Calu3 (cell line): ENCODE measurements at regions of chr18 and their contacts with region 1.

Region 1: DNA sequence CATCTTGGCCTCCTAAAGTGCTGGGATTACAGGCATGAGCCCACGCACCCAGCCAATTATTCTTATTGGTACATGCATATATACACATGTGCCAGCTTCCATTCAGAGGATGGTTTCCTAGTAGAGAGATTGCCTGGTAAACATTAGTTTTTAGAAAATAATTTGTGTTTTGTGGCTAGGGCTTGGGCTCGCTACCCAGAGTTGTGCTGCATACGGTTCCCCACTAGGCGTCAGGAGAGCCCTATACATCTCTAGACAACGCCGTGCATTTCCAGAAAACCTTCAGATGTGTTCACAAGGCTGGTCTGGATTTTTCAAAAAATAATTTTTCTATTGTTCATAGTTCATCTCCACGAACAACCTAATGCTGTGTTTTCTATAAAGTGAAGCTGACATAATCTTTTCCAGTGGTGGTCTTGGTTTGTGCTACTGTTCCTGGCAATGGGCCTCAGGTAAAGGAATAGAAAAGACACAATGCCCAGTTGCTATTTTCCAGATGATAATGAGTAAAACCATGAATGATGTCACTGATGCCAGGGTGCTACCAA is 14.7 kb upstream of the AFG3L2 start:
- DNase-seq: peak; percentile 71
- H3K4me3 Mint-ChIP-seq: no peak overlapping the region
- H3K27ac Mint-ChIP-seq: no peak overlapping the region
- H3K4me1 Mint-ChIP-seq: peaks cover 23% of the 10 kb centered on the region
- H3K27me3 Mint-ChIP-seq: no peaks in the 10 kb centered on the region
- CTCF ChIP-seq: peak; percentile 83

Region 2: GRCh38 chr18:12422936-12423335 is 31.2 kb after region 1 on chr18:
- CTCF ChIA-PET with region 1: interaction called, 6 read pairs
- intact Hi-C with region 1: loop called (anchors 1 kb)
- DNase-seq: peak; percentile 57
- H3K4me3 Mint-ChIP-seq: no peak overlapping the region
- H3K27ac Mint-ChIP-seq: no peak overlapping the region
- H3K4me1 Mint-ChIP-seq: no peaks in the 10 kb centered on the region
- H3K27me3 Mint-ChIP-seq: no peaks in the 10 kb centered on the region
- CTCF ChIP-seq: peak; percentile 19

Region 3: GRCh38 chr18:12491611-12492435 is 100.1 kb after region 1 on chr18:
- CTCF ChIA-PET with region 1: no interaction called
- intact Hi-C with region 1: no loop called
- DNase-seq: no peak
- H3K4me3 Mint-ChIP-seq: no peak overlapping the region
- H3K27ac Mint-ChIP-seq: no peak overlapping the region
- H3K4me1 Mint-ChIP-seq: no peaks in the 10 kb centered on the region
- H3K27me3 Mint-ChIP-seq: no peaks in the 10 kb centered on the region
- CTCF ChIP-seq: no peak

Region 4: DNA sequence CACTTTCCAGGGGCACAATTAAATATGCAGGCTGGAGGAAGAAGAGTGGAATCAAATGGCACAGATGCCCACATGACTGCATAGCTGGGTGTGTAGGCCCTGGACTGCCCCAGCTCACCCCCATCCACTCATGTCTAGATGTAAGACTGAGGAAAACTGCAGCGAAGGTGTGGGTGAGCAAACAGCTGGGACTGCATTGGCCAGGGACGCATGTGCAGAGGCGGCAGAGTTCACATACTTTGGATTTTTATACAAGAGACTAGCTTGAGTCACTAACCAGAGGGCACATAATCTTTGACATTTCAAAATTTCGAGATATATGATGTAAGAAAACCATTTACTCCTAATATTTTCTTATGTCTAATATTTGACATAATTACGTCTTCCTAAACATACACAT is 206.1 kb after region 1 on chr18:
- CTCF ChIA-PET with region 1: no interaction called
- intact Hi-C with region 1: loop called (anchors 5 kb)
- DNase-seq: peak; percentile 75
- H3K4me3 Mint-ChIP-seq: peak overlapping the region; percentile 18
- H3K27ac Mint-ChIP-seq: peak overlapping the region; percentile 74
- H3K4me1 Mint-ChIP-seq: peaks cover 63% of the 10 kb centered on the region
- H3K27me3 Mint-ChIP-seq: no peaks in the 10 kb centered on the region
- CTCF ChIP-seq: no peak

Region 5: GRCh38 chr18:12702221-12703095 is 310.8 kb after region 1 on chr18 and contains the starts of genes CEP76 and PSMG2:
- CTCF ChIA-PET with region 1: interaction called, 4 read pairs
- intact Hi-C with region 1: loop called (anchors 1 kb)
- DNase-seq: peak; percentile 86
- H3K4me3 Mint-ChIP-seq: peak within 1 kb of the TSS; percentile 86
- H3K27ac Mint-ChIP-seq: peak within 1 kb of the TSS; percentile 99
- H3K4me1 Mint-ChIP-seq: peaks cover 24% of the 10 kb centered on the region
- H3K27me3 Mint-ChIP-seq: no peaks in the 10 kb centered on the region
- CTCF ChIP-seq: no peak
- total RNA-seq, gene CEP76: 10.1 and 12.7 TPM in 2 replicates
- total RNA-seq, gene PSMG2: 78.6 and 89.6 TPM in 2 replicates